HepG2 (cell line): ENCODE measurements at regions of chr9 and their contacts with region 1.

Region 1: GRCh38 chr9:90914868-90915483 is 113.4 kb downstream of the SYK start:
- DNase-seq: peak; percentile 63
- ATAC-seq: peak; percentile 97
- H3K4me3 ChIP-seq: no peak overlapping the region
- H3K27ac ChIP-seq: no peak overlapping the region
- H3K4me1 ChIP-seq: no peaks in the 10 kb centered on the region
- H3K27me3 ChIP-seq: no peaks in the 10 kb centered on the region; a peak in 2 of 5 replicates
- CTCF ChIP-seq: peak; percentile 98
- EP300 ChIP-seq: no peak
- POLR2A ChIP-seq: no peak
- RAD21 ChIP-seq: peak; percentile 94

Region 2: GRCh38 chr9:91433180-91433579 is 518.2 kb after region 1 on chr9:
- CTCF ChIA-PET with region 1: interaction called, 4 read pairs
- POLR2A ChIA-PET with region 1: no interaction called
- in situ Hi-C with region 1: loop called (anchors 5 kb)
- intact Hi-C with region 1: loop called (anchors 1 kb)
- DNase-seq: peak; percentile 71
- ATAC-seq: peak; percentile 82
- H3K4me3 ChIP-seq: no peak overlapping the region
- H3K27ac ChIP-seq: no peak overlapping the region
- H3K4me1 ChIP-seq: peaks cover 4% of the 10 kb centered on the region; the same call in 1 of the 2 replicates
- H3K27me3 ChIP-seq: peaks cover 0 to 6% of the 10 kb centered on the region in 2 experiments; a peak in 1 of 5 replicates
- CTCF ChIP-seq: peak; percentile 76
- EP300 ChIP-seq: 0 out of 4 replicates have a peak, but pooled peaks of 1 of the 2 experiments have one; percentile 9
- POLR2A ChIP-seq: no peak
- RAD21 ChIP-seq: 0 out of 2 replicates have a peak, but pooled peaks have one; percentile 39

Region 3: GRCh38 chr9:91676046-91676445 is 761.1 kb after region 1 on chr9:
- CTCF ChIA-PET with region 1: interaction called, 12 read pairs
- POLR2A ChIA-PET with region 1: no interaction called
- in situ Hi-C with region 1: loop called (anchors 5 kb)
- intact Hi-C with region 1: loop called (anchors 1 kb)
- DNase-seq: peak; percentile 15
- ATAC-seq: peak; percentile 88
- H3K4me3 ChIP-seq: no peak overlapping the region
- H3K27ac ChIP-seq: no peak overlapping the region
- H3K4me1 ChIP-seq: no peaks in the 10 kb centered on the region
- H3K27me3 ChIP-seq: no peaks in the 10 kb centered on the region; a peak in 2 of 5 replicates
- CTCF ChIP-seq: peak; percentile 72
- EP300 ChIP-seq: no peak
- POLR2A ChIP-seq: no peak
- RAD21 ChIP-seq: no peak

Region 4: DNA sequence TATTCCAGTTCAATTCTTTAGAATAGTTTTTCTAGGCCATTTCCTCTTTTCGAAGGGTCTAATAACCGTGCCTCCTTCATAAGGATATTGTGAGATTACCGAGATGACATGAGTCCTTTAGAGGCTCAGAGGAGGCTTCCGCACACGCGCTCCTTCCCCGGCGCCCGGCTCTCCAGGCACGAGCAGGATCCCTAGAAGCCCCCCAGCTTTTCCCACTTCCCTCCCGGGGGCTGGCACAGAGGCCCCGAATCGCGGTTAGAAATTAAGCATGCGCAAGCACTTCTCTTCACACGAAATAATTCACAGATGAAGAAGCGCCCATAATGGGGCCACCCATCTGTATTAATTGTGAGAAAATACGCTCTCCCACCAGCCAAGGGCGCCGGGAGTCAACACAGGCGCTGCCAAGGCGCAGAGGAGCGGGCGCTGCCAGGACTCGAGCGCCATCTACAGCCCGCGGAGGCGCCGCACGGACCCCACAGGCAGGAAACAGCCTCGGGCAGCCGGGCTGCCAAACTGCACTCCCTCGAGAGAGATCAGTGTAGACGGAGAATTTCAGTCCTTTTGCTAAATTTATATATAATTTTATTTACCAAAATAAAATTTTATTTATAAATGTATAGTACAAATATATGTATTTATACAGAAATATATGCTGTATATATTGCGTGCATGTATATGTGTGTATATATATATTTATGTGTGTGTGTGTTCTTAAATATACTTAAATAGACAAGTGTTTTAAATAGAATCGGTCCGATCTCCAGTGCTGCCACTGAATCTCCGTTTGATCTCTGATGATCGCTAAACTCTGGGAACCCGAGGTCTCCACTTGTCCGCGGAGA is 766.7 kb after region 1 on chr9:
- CTCF ChIA-PET with region 1: interaction called, 12 read pairs
- POLR2A ChIA-PET with region 1: no interaction called
- in situ Hi-C with region 1: loop called (anchors 5 kb)
- intact Hi-C with region 1: loop called (anchors 1 kb)
- DNase-seq: peak; percentile 22
- ATAC-seq: peak; percentile 97
- H3K4me3 ChIP-seq: no peak overlapping the region
- H3K27ac ChIP-seq: no peak overlapping the region
- H3K4me1 ChIP-seq: no peaks in the 10 kb centered on the region
- H3K27me3 ChIP-seq: peaks cover 2 to 12% of the 10 kb centered on the region in 2 experiments; a peak in 3 of 5 replicates
- CTCF ChIP-seq: peak; percentile 82
- EP300 ChIP-seq: no peak
- POLR2A ChIP-seq: no peak
- RAD21 ChIP-seq: peak; percentile 75

Region 5: DNA sequence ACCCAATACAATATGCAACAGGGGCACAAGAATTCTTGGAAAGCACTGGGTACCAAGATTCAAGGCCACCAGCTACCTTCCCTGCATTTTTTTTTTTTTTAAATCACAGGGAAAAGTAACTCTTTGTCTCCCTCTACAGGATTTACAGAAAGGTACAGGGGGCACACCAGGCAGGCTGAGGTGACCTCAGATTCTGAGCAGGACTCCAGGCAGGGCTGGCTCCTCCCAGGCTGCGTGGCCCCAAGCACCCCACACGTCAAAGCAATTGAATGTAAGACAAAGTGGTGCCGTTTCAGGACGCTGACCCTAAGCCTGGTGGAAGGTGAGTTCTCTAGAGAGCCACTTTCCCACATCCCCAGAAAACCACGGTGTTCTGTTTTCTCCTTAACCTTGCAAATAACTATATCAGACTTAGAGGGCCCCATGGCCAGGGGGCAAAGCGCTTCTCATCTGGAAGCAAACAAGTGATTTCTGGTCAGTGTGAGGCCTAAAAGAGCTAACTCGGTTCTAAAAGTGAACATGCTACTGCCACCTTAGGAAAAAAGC is 812.4 kb after region 1 on chr9:
- CTCF ChIA-PET with region 1: interaction called, 8 read pairs
- POLR2A ChIA-PET with region 1: no interaction called
- in situ Hi-C with region 1: no loop called
- intact Hi-C with region 1: loop called (anchors 1 kb)
- DNase-seq: peak; percentile 41
- ATAC-seq: peak; percentile 94
- H3K4me3 ChIP-seq: no peak overlapping the region
- H3K27ac ChIP-seq: no peak overlapping the region
- H3K4me1 ChIP-seq: 0 out of 2 replicates have a peak, but pooled peaks cover 8% of the 10 kb centered on the region
- H3K27me3 ChIP-seq: peaks cover 4 to 30% of the 10 kb centered on the region in 2 experiments; a peak in 4 of 5 replicates
- CTCF ChIP-seq: peak; percentile 70
- EP300 ChIP-seq: no peak
- POLR2A ChIP-seq: no peak
- RAD21 ChIP-seq: peak; percentile 36; the same call in 1 of the 2 replicates